ENCODE measurements at regions of chr10 and their contacts with region 1.

Region 1: GRCh38 chr10:15901889-15902288 is 41.6 kb upstream of the MINDY3 start:
- DNase-seq: no peak
- H3K4me3 ChIP-seq: no peak overlapping the region
- H3K27ac ChIP-seq: no peak overlapping the region
- H3K4me1 ChIP-seq: no peaks in the 10 kb centered on the region
- H3K27me3 ChIP-seq: no peaks in the 10 kb centered on the region
- CTCF ChIP-seq: no peak
- POLR2A ChIP-seq: no peak

Region 2: DNA sequence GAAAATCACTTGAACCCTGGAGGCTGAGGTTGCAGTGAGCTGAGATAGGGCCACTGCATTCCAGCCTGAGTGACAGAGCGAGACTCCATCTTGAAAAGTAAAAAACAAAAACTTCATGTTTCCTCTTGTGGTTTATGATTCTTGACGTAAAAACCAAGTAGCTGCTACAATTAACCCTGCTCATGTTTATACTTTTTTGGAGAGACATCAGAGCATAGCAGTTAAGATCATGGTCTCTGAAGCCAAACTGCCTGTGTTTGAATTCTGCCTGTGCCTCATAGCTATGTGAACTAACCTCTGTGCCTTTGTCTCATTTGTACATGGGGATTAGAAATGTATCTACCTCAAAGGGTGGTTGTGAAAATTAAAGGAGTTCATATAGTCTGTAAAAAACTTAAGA is 996.0 kb before region 1 on chr10:
- intact Hi-C with region 1: no loop called
- DNase-seq: no peak
- H3K4me3 ChIP-seq: no peak overlapping the region
- H3K27ac ChIP-seq: no peak overlapping the region
- H3K4me1 ChIP-seq: no peaks in the 10 kb centered on the region
- H3K27me3 ChIP-seq: no peaks in the 10 kb centered on the region
- CTCF ChIP-seq: no peak
- POLR2A ChIP-seq: no peak

Region 3: DNA sequence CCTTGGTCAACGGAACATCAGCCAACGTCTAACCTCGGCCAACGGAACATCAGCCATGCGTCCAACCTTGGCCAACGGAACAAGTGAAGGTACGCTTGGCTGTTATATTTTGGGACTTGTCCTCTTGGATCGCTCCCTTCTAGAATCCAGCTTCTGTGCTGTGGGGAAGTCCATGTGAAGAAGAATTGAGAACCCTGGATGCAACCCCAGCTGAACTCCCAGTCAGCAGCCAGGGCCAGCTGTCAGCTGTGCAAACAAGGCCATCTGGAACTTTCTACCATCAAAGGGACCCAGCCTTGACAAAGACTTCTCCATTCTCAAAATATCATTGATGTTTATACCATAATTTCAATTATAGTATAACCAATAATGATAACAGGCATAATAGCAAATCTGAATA is 138.9 kb before region 1 on chr10:
- intact Hi-C with region 1: no loop called
- DNase-seq: no peak
- H3K4me3 ChIP-seq: no peak overlapping the region
- H3K27ac ChIP-seq: no peak overlapping the region
- H3K4me1 ChIP-seq: no peaks in the 10 kb centered on the region
- H3K27me3 ChIP-seq: no peaks in the 10 kb centered on the region
- CTCF ChIP-seq: no peak
- POLR2A ChIP-seq: no peak

Region 4: GRCh38 chr10:15824498-15824897 is 77.4 kb before region 1 on chr10:
- intact Hi-C with region 1: no loop called
- DNase-seq: no peak
- H3K4me3 ChIP-seq: no peak overlapping the region
- H3K27ac ChIP-seq: no peak overlapping the region
- H3K4me1 ChIP-seq: no peaks in the 10 kb centered on the region
- H3K27me3 ChIP-seq: no peaks in the 10 kb centered on the region
- CTCF ChIP-seq: peak in 4 of 6 experiments; percentile 28 to 44 (median 38)
- POLR2A ChIP-seq: no peak

Region 5: DNA sequence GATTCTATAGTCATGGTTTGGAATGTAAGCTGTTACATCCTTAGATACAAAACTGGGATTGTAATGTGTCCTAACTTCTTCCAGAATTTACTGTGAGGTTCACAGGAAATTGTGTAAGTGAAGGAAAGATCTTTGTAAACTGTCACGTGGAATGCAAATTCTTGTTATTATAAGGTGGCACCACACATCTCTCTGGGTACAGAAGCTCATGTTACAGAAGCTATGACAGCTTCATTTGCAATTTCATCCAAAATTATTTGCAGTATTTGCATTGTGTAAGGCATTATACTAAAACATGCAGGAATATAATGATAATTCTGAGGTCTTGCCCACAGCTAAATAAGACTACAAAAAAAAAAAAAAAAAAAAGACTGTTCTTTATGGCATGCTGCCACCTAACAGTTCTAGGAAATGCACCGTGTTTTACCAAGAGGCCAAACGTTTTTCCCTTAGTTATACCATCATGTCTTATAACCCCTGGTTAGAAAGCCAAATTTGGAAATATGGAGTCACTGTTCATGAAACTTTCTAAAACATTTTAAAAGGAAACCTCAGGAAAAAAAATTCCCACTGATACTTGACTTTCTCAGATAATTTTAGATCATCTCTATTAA is 59.2 kb before region 1 on chr10:
- intact Hi-C with region 1: no loop called
- DNase-seq: no peak
- H3K4me3 ChIP-seq: no peak overlapping the region
- H3K27ac ChIP-seq: no peak overlapping the region
- H3K4me1 ChIP-seq: no peaks in the 10 kb centered on the region
- H3K27me3 ChIP-seq: no peaks in the 10 kb centered on the region
- CTCF ChIP-seq: no peak
- POLR2A ChIP-seq: no peak

Region 6: GRCh38 chr10:16777473-16778370 is 875.8 kb after region 1 on chr10:
- intact Hi-C with region 1: loop called (anchors 10 kb)
- DNase-seq: no peak
- H3K4me3 ChIP-seq: no peak overlapping the region
- H3K27ac ChIP-seq: peak overlapping the region in 2 of 3 donors; percentile 34 to 64
- H3K4me1 ChIP-seq: peaks cover 0 to 6% of the 10 kb centered on the region in 2 donors
- H3K27me3 ChIP-seq: no peaks in the 10 kb centered on the region
- CTCF ChIP-seq: peak; percentile 32 to 86 (median 64)
- POLR2A ChIP-seq: no peak